ENCODE measurements at regions of chr9 and their contacts with region 1.

Region 1: DNA sequence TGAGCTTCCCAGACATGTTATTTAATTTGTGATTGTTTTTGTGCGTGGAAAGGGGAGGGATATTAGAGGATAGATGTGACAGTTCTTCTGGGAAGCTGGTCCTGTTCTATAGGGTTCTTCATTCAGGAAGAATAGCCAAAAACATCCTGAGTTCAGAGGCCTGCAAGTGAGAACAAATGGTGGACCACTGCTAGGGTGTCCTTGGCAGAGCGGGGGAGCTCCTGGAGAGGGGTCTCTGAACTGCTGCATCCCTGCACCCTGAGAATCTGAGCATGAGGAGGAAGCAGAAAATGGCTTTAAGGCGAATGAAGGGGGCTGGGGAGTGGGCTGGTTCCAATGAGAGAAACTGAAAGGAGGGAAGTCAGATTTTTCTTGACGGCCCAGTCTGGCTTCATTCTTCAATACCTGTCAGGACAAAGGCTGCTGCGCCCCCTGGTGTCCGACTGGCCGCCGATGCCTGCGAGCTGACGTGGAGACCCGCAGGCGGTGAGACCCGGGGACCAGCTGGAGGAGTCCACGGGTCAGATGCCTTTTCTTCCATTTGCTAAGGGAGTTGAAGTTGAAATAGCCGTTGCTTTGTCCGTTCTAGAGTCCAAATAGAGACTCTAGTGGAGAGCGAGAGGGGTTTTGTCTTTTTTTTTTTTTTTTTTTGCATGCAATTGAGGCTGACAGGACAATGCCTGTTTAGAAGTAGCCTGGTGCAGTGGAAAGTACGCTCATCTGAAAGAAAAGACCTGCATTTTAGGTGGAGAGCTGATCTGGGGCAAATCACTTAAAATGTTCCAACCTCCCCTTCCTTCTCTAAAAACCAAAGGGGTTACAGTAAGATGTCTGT is 39.5 kb upstream of the NFIB start:
- DNase-seq: peak; percentile 89 to 99 (median 97)

Region 2: GRCh38 chr9:13427587-13427986 is 925.9 kb before region 1 on chr9:
- intact Hi-C with region 1: loop called (anchors 2 kb)
- DNase-seq: no peak

Region 3: GRCh38 chr9:13450723-13451122 is 902.7 kb before region 1 on chr9:
- intact Hi-C with region 1: loop called (anchors 5 kb)
- DNase-seq: no peak

Region 4: DNA sequence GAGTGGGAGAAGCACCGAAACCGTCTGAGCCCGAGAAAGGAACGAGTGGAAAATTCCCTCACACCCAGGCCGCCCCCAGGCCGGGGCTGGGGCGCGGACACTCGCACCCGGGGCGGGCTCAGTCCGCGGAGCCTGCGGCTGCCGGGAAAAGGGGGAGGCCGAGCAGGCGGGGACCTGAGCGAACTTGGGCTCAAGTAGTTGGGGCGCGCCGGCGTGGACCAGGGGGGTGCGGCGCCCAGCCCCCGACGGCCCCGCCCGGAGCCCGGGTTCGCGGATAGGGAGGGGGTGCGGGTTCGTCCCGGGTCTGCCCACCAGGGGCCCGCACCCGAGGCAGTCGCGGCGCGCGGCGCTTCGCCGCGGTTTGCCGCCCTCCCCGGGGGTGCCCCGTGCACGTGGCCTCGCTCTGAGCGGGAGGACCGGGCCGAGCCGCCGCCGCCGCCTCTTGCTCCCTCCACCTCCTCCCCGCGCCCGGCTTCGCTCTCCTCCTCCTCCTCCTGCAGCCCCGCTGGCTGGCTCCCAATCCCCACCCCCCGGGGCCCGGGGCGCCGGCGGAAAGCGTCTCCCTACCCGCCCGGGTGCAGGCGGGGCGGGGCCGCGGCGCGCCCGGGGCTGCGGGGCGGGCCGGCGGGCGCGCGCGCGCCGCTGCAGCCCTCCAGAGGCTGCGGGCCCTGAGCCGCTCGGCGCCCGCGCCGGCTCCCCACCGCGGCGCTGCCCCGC is 38.4 kb before region 1 on chr9:
- intact Hi-C with region 1: loop called (anchors 5 kb)
- DNase-seq: peak; percentile 80 to 99 (median 90)

Region 5: DNA sequence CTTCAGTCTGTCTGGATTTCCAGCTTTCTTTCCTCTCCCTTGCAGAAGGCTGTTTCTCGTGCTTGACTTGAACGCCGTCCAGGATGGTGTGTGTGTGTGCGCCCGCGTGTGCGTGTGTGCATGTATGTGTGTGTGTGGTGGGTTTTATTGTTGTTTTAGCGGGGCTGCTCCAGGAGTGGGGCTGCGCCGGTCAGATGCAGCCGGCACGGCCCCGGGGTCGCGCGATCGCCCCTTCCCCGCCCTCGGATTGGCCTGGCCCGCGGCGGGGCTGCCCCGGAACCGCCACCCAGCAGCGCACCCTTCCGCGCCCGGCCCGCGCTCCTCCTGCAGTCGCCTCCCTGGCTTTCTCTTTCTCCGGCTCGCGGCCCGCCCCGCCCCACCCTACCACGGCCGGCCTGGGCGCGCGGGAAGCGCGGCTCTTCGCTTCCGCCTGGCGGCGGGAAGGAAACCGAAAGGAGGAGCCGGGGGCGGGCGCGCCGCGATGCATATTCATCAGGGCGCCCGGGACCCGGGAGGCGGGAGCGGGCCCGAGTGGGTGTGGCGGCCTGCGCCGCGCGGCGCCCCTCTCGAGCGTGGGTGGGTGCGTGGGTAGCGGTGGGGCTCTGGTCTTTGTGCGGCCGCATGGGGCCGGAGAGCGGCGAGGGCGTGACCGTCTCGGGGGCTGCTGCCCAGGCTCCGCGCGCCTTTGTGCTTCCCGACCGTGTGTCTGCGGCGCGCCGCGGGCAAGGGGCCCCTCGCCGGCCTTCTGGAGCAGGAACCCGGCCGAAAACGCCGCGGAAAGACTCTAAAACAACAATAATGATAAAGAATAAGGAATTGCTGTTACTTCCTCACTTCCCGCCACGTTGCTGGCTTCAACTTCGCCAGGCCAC is 31.0 kb before region 1 on chr9:
- intact Hi-C with region 1: loop called (anchors 2 kb)
- DNase-seq: peak; percentile 83 to 98 (median 86)

Region 6: DNA sequence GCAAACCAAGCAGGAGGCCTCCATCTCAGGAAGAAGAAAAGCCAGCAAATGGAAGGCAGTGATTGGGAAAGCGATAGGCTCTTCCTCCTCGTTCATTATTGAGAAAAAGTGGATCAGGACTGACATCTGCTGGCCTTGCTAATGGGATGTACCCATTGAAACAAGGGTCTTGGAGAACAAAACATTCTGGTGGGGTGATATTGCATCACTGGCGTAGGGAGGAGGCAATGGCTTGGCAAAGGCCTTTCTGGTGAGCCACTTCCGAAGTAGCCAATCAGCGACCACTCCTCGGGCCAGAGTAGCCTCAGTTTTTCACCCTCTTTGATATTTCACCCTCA is 47.2 kb after region 1 on chr9:
- intact Hi-C with region 1: loop called (anchors 5 kb)
- DNase-seq: peak in 9 of 10 donors; percentile 23 to 90 (median 58)

Measured in posterior cingulate gyrus (tissue), 11 donors.